Activated CD4-positive, alpha-beta T cell treated with anti-CD3 and anti-CD28 coated beads, Interleukin-2, amount 10 ng/mL, durations not matched to agents 24 days and 14 days (primary cell): ENCODE measurements at regions of chr19 and their contacts with region 1.

Region 1: DNA sequence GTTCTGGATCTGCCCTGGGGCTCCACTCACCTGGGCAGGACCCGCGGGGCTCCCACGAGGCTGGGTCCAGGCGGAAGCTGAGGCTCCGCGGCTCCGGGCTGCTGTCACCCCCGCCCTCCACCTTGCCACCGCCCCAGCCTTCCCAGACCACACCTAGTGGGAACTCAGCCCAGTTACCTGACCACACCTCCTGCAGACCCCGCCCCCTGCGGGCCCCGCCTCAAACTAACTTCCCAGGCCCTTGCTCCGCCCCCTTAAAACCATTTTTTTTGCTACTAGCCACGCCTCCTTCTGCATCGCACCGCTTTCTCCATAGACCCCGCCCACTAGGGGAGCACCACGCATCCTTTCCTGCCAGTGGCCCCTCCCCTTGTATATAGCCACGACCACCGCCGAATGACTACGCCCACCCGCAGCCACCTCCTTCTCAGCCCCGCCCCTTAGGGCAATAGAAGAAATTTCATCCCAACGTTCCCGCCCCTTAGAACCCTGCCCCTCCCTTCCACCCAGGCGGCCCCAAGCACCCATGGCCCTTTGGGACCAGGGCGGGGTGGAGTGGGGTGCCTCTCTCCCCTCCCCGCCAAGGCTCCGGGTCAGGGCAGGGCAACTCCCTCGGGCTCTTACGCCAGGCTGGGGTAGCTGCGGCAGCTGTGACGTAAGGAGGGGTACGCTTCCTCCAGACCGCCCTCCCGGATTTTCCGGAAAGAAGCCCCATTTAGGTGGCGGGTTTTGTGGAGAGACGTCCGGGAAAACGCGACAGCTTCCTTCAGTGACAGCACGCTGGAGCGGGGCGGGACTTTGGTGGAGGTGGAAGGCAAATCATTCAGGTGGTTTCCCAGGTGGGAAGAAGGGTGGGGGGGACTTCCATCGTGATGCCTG is at the start of gene SH2D3A:
- DNase-seq: peak; percentile 98
- H3K4me3 Mint-ChIP-seq: peak within 1 kb of the TSS; percentile 88
- H3K27ac Mint-ChIP-seq: peak within 1 kb of the TSS; percentile 92
- H3K4me1 Mint-ChIP-seq: peaks cover 46% of the 10 kb centered on the region
- H3K27me3 Mint-ChIP-seq: no peaks in the 10 kb centered on the region
- total RNA-seq, gene SH2D3A: 9.8 and 11.0 TPM in 2 replicates

Region 2: GRCh38 chr19:5466814-5467291 is 1300.7 kb before region 1 on chr19:
- intact Hi-C with region 1: no loop called
- DNase-seq: no peak
- H3K4me3 Mint-ChIP-seq: no peak overlapping the region
- H3K27ac Mint-ChIP-seq: no peak overlapping the region
- H3K4me1 Mint-ChIP-seq: no peaks in the 10 kb centered on the region
- H3K27me3 Mint-ChIP-seq: no peaks in the 10 kb centered on the region

Region 3: GRCh38 chr19:6753178-6754031 is 14.2 kb before region 1 on chr19:
- intact Hi-C with region 1: loop called (anchors 2 kb)
- DNase-seq: peak; percentile 95
- H3K4me3 Mint-ChIP-seq: peak overlapping the region; percentile 81
- H3K27ac Mint-ChIP-seq: peak overlapping the region; percentile 96
- H3K4me1 Mint-ChIP-seq: peaks cover 15% of the 10 kb centered on the region
- H3K27me3 Mint-ChIP-seq: no peaks in the 10 kb centered on the region

Region 4: GRCh38 chr19:6813659-6814058 is 46.1 kb after region 1 on chr19:
- intact Hi-C with region 1: loop called (anchors 2 kb)
- DNase-seq: no peak
- H3K4me3 Mint-ChIP-seq: no peak overlapping the region
- H3K27ac Mint-ChIP-seq: no peak overlapping the region
- H3K4me1 Mint-ChIP-seq: peaks cover 49% of the 10 kb centered on the region
- H3K27me3 Mint-ChIP-seq: no peaks in the 10 kb centered on the region